Kidney (tissue), 22 donors: ENCODE measurements at regions of chr3 and their contacts with region 1.

Region 1: DNA sequence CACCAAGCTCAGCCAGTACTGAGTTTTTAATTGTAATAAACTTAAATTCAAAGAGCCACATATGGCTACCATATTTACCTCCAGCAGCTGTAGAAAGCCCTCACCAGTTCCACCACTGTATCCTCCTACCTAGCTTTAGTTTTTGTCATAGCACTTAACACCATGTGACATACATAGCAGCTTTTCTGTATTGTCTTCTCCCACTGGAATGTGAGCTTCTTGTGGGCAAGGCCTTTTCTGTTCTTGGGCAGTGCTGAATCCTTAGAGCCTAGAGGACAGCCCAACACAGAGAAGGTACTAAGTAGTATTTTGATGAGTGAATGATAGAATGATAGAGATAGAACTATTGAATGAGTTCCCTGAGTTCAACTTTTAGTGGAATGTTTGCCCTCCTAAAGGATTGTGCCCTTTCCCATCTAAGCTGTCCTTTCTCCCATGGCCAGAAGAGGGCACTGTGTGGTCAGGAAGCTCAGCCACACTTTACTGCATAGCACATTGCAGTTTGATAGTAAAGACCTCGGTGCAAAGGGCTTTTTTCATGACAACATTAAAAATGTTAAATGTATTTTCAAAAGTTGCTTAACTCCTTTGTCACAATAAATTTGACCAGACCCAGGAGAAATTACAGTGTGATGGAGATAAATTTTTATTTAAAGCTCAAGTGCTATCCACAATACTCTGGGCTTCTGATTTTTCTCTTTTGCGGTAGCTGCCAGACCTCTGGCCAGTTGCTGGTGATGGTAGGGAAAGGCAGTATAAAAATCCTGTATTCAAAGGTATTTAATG is 115.8 kb downstream of the GHSR start:
- DNase-seq: peak in 4 of 5 donors; percentile 59 to 84 (median 70)
- H3K4me3 ChIP-seq: no peak overlapping the region
- H3K27ac ChIP-seq: peak overlapping the region in 1 of 2 donors; percentile 55
- H3K4me1 ChIP-seq: peaks cover 0 to 4% (median 4%) of the 10 kb centered on the region in 3 donors
- H3K27me3 ChIP-seq: no peaks in the 10 kb centered on the region
- CTCF ChIP-seq: peak; percentile 95

Region 2: DNA sequence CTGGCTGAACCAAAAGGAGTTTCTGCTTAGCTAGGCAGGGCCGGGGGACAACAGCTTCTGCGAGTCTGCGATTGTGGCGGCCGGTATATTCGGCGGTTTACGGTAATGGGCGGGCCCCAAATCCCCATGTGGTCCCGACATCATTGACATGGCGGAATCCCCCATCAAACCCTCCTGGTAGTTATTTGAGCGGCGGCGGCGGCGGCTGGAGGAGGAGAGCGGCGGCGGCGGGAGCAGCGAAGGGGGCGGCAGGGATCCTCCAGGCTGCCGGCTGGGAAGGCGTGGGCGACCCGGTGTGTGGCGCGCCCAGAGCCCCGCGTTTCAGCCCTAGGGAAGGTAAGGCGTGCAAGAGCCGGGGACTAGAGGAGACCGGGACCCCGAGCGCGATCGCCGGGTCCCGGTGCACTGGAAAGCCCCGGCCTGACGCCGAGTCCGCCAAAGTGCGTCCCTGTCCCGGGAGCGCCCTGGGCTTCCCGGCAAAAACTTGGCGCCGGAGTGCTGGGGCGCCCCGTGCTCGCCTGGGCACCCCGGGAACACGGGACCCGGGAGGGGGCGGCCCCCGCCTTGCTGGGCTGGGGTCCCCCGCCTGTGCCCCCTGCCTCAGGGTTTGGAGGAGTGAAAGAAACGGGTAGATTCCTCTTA is 292.9 kb before region 1 on chr3 and contains the start of gene FNDC3B:
- intact Hi-C with region 1: loop called (anchors 10 kb)
- DNase-seq: peak; percentile 96 to 98 (median 97)
- H3K4me3 ChIP-seq: peak within 1 kb of the TSS; percentile 69 to 79 (median 76)
- H3K27ac ChIP-seq: peak within 1 kb of the TSS; percentile 98
- H3K4me1 ChIP-seq: peaks cover 2 to 8% (median 2%) of the 10 kb centered on the region in 3 donors
- H3K27me3 ChIP-seq: no peaks in the 10 kb centered on the region
- CTCF ChIP-seq: no peak
- total RNA-seq, gene FNDC3B: 185 TPM

Region 3: GRCh38 chr3:172391592-172392302 is 59.3 kb after region 1 on chr3:
- intact Hi-C with region 1: no loop called
- DNase-seq: peak in 2 of 5 donors; percentile 12 to 68
- H3K4me3 ChIP-seq: no peak overlapping the region
- H3K27ac ChIP-seq: no peak overlapping the region
- H3K4me1 ChIP-seq: no peaks in the 10 kb centered on the region
- H3K27me3 ChIP-seq: no peaks in the 10 kb centered on the region
- CTCF ChIP-seq: no peak